ENCODE measurements at regions of chr1 and their contacts with region 1.

Region 1: GRCh38 chr1:212558693-212559480 is 49.7 kb upstream of the ATF3 start:
- DNase-seq: peak; percentile 97
- ATAC-seq: peak; percentile 92
- H3K4me3 ChIP-seq: peak overlapping the region; percentile 36 to 89 (median 73)
- H3K4me3 Mint-ChIP-seq: peak overlapping the region; percentile 90
- H3K27ac ChIP-seq: peak overlapping the region; percentile 95 to 96
- H3K27ac Mint-ChIP-seq: peak overlapping the region; percentile 96
- H3K4me1 ChIP-seq: peaks cover 12% of the 10 kb centered on the region in 2 donors
- H3K4me1 Mint-ChIP-seq: peaks cover 13% of the 10 kb centered on the region
- H3K27me3 ChIP-seq: peaks cover 0 to 5% (median 0%) of the 10 kb centered on the region in 4 experiments
- H3K27me3 Mint-ChIP-seq: peaks cover 4% of the 10 kb centered on the region
- CTCF ChIP-seq: no peak

Region 2: DNA sequence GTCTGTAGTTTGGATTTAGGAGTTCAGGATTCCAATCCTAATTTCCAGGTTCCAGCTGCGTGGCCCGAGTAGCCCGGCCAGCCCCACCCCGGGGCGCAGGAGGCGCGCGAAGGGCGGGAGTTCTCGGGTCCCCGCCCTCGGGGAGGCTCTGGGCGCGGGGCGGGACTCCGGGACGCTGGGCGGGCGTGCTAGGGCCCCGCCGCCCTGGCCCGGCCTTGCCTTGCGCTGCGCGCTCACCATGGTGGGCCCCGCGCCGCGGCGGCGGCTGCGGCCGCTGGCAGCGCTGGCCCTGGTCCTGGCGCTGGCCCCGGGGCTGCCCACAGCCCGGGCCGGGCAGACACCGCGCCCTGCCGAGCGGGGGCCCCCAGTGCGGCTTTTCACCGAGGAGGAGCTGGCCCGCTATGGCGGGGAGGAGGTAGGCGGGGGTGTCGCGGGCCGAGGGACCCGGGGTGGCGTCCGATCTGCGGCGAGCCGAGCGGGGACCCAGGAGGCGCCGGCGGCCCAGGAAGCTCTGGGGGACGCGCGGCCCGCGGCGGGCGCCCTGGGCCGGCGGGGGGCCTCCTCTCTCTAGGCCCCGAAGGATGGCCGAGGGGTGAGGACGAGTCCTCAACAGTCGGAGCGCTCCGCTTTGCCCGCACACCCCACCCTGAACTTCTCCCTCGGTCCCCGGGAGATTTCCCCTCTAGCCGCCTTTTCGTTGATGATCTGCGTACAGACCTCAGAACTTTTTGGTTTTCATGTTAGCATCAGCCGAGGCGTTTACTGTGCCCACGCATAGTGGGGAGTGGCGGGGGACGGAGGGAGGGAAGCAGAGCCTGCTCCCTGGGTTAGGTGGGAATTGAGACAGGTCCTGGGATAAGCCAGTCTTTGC is 125.9 kb before region 1 on chr1 and contains the start of gene NENF:
- CTCF ChIA-PET with region 1: no interaction called
- POLR2A ChIA-PET with region 1: no interaction called
- intact Hi-C with region 1: loop called (anchors 5 kb)
- DNase-seq: peak; percentile 81
- ATAC-seq: peak; percentile 99
- H3K4me3 ChIP-seq: peak within 1 kb of the TSS; percentile 26 to 82 (median 58)
- H3K4me3 Mint-ChIP-seq: peak within 1 kb of the TSS; percentile 82
- H3K27ac ChIP-seq: peak within 1 kb of the TSS in 1 of 2 donors; percentile 65
- H3K27ac Mint-ChIP-seq: peak within 1 kb of the TSS; percentile 33
- H3K4me1 ChIP-seq: peaks cover 12 to 15% of the 10 kb centered on the region in 2 donors
- H3K4me1 Mint-ChIP-seq: peaks cover 25% of the 10 kb centered on the region
- H3K27me3 ChIP-seq: no peaks in the 10 kb centered on the region
- H3K27me3 Mint-ChIP-seq: no peaks in the 10 kb centered on the region
- CTCF ChIP-seq: no peak
- total RNA-seq, gene NENF: 20.3 and 22.7 TPM in 2 replicates

Region 3: DNA sequence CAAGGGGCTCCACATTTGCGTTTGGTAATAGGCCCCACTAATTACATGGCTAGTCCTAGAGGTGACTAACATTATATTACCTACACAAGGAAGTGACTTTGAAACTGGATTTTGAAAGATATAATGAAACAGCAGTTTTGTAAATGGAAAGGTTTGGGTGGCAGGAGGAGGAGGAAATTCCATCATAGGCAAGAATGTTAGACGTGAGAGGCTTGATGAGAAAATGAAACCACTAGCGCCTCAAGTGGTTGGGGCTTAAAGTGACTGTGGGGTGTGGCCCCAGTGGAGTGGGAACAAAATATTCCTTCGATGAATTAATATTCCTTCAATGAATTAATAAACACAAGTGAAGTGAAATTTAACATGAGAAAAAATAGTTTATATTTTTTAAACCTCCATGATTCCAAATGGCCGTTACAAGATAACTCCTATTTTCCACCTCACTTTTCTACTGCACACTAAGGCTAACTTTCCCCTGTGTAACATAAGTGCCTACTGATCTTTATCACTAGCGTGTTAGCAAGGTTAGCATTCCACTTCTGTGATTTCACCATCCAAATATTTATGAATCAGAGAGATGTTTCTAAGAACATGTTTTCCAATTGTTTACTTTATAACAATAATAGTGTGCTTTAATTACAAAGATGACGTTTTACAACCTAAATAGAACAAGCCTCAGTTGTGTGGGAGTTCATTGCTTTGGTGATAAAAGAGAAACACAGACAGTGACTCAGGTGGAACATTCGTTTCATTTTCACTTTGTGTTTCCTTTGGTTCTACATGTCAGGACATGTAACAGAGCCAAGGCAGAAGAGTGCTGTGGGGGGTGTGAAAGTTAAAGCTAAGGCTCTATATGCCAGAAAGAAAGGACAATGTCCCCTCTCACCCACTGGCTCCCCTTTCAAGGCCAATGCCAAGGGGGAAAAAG is 37.2 kb after region 1 on chr1:
- CTCF ChIA-PET with region 1: no interaction called
- POLR2A ChIA-PET with region 1: no interaction called
- intact Hi-C with region 1: loop called (anchors 2 kb)
- DNase-seq: peak; percentile 67
- ATAC-seq: peak; percentile 85
- H3K4me3 ChIP-seq: peak overlapping the region in 3 of 5 experiments; percentile 16 to 57 (median 19)
- H3K4me3 Mint-ChIP-seq: peak overlapping the region; percentile 74
- H3K27ac ChIP-seq: peak overlapping the region; percentile 44 to 72
- H3K27ac Mint-ChIP-seq: peak overlapping the region; percentile 80
- H3K4me1 ChIP-seq: peaks cover 11 to 12% of the 10 kb centered on the region in 2 donors
- H3K4me1 Mint-ChIP-seq: peaks cover 14% of the 10 kb centered on the region
- H3K27me3 ChIP-seq: peaks cover 0 to 2% (median under 1%) of the 10 kb centered on the region in 4 experiments
- H3K27me3 Mint-ChIP-seq: peaks cover 19% of the 10 kb centered on the region
- CTCF ChIP-seq: peak; percentile 40

Region 4: GRCh38 chr1:213015099-213016050 is 456.5 kb after region 1 on chr1 and contains the start of gene ANGEL2:
- CTCF ChIA-PET with region 1: no interaction called
- POLR2A ChIA-PET with region 1: no interaction called
- intact Hi-C with region 1: loop called (anchors 1 kb)
- DNase-seq: peak; percentile 97
- ATAC-seq: peak; percentile 96
- H3K4me3 ChIP-seq: peak within 1 kb of the TSS; percentile 65 to 89 (median 77)
- H3K4me3 Mint-ChIP-seq: peak within 1 kb of the TSS; percentile 98
- H3K27ac ChIP-seq: peak within 1 kb of the TSS; percentile 81 to 92
- H3K27ac Mint-ChIP-seq: peak within 1 kb of the TSS; percentile 99
- H3K4me1 ChIP-seq: peaks cover 7 to 14% of the 10 kb centered on the region in 2 donors
- H3K4me1 Mint-ChIP-seq: peaks cover 31% of the 10 kb centered on the region
- H3K27me3 ChIP-seq: no peaks in the 10 kb centered on the region
- H3K27me3 Mint-ChIP-seq: no peaks in the 10 kb centered on the region
- CTCF ChIP-seq: no peak
- total RNA-seq, gene ANGEL2: 86.0 and 94.2 TPM in 2 replicates